Sigmoid colon (tissue), 7 donors: ENCODE measurements at regions of chr18 and their contacts with region 1.

Region 1: GRCh38 chr18:11851146-11851805 is at the start of gene CHMP1B:
- DNase-seq: peak; percentile 99
- H3K4me3 ChIP-seq: peak within 1 kb of the TSS; percentile 72 to 94 (median 88)
- H3K27ac ChIP-seq: peak within 1 kb of the TSS; percentile 93 to 99 (median 94)
- H3K4me1 ChIP-seq: peaks cover 0 to 34% (median 26%) of the 10 kb centered on the region in 4 donors
- H3K27me3 ChIP-seq: no peaks in the 10 kb centered on the region
- CTCF ChIP-seq: no peak
- EP300 ChIP-seq: peak in 2 of 4 donors; percentile 59 to 86
- POLR2A ChIP-seq: peak; percentile 98 to 99
- total RNA-seq, gene CHMP1B: 32.1 to 47.1 (median 38.2) TPM

Region 2: GRCh38 chr18:11733031-11733430 is 118.2 kb before region 1 on chr18:
- intact Hi-C with region 1: loop called (anchors 5 kb)
- DNase-seq: peak; percentile 88
- H3K4me3 ChIP-seq: peak overlapping the region in 3 of 4 donors; percentile 24 to 34 (median 26)
- H3K27ac ChIP-seq: no peak overlapping the region
- H3K4me1 ChIP-seq: peaks cover 0 to 7% (median 0%) of the 10 kb centered on the region in 4 donors
- H3K27me3 ChIP-seq: peaks cover 0 to 4% (median 0%) of the 10 kb centered on the region in 3 donors
- CTCF ChIP-seq: peak; percentile 41 to 91 (median 69)
- EP300 ChIP-seq: no peak
- POLR2A ChIP-seq: no peak

Region 3: DNA sequence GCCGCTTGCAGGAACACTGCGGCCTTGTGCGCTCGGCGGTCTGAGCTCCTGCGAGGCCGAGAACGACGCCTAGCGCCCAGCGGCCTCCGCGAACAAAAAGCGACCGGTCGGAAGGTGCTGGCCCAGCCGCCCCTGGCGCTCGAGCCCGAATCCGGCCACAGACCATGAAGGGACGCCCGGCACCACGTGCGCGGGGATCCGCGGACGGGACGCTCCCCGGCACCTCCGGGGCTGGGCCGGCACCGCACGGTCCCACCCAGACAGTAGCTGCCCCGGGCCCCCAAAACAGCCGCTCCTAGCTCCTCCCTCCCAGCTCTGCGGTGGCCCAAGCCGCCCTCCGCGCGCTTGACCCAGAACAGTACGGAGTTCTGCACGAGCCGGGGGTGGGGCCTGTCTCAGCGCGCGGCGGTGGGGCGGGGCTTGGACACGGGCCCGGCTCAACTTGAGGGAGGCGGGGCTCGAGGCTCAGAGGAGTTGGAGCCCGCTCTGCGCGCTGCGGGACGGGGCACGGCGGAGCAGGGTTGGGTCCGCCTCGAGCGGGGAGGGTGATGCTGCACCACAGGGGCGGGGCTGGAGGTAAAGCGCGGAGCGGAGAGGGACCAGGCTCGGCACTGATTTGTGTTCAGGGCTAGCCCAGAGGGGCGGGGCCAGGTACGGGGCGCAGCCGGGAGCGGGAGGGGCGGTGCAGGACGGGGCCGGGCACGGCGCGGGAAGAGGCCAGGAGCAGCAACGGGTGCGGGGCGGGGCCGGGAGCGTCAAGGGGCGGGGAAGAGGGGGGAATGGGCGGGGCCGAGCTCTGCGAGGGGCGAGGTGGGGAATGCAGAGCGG is 129.5 kb after region 1 on chr18:
- intact Hi-C with region 1: loop called (anchors 10 kb)
- DNase-seq: peak; percentile 100
- H3K4me3 ChIP-seq: peak overlapping the region; percentile 72 to 82 (median 80)
- H3K27ac ChIP-seq: peak overlapping the region; percentile 89 to 99 (median 96)
- H3K4me1 ChIP-seq: peaks cover 0 to 36% (median 19%) of the 10 kb centered on the region in 4 donors
- H3K27me3 ChIP-seq: no peaks in the 10 kb centered on the region
- CTCF ChIP-seq: peak in 1 of 4 experiments; percentile 7
- EP300 ChIP-seq: peak in 2 of 4 donors; percentile 2 to 43
- POLR2A ChIP-seq: peak; percentile 75 to 85

Region 4: GRCh38 chr18:12271376-12272235 is 420.3 kb after region 1 on chr18:
- intact Hi-C with region 1: loop called (anchors 10 kb)
- DNase-seq: peak; percentile 91
- H3K4me3 ChIP-seq: peak overlapping the region; percentile 17 to 51 (median 41)
- H3K27ac ChIP-seq: peak overlapping the region; percentile 65 to 87 (median 74)
- H3K4me1 ChIP-seq: peaks cover 0 to 10% (median 6%) of the 10 kb centered on the region in 4 donors
- H3K27me3 ChIP-seq: no peaks in the 10 kb centered on the region
- CTCF ChIP-seq: peak; percentile 82 to 90 (median 87)
- EP300 ChIP-seq: peak in 2 of 4 donors; percentile 1 to 11
- POLR2A ChIP-seq: no peak

Region 5: DNA sequence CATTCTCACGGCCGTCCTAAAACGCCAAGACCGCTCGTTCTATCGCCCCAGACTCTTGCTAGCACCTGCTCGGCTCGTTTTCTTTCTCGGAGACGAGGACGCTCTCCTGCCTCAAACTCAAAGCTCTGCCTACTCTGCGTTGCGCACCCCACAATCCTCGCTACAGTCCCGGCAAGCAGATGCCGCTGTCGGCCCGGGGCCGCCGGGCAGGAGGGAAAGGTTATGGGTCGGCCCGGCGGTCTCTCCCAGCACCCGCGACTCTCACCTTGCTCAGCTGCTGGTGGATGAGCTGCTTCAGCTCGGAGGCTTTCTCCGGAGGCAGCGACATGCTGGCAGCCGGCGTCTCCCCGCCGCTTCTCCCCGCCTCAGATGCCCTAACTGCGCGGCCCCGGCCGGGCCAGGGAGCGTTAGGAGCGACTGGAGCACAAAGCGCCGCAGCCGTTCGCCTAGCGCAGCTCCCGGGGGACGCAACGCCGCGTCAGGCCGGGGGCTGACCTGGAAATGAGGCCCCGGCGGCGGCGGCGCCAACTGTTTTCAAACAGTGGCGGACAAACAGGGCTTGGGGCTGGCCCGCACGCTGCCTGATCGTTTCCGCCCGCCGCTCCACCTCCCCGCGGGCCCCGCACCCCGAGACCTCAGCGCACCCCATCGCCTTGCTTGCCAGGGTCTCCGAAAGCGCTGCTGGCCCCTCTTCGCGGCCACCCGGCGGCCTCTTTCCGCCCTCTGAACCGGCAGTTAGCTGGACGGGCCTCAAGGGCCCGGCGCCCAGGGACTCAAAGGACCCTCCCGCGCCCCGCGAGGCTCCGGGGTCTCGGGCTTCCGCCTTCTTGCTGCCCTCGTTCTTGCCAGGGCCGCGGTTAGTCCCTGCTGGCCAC is 851.2 kb after region 1 on chr18 and contains the starts of genes CEP76 and PSMG2:
- intact Hi-C with region 1: loop called (anchors 5 kb)
- DNase-seq: peak; percentile 93
- H3K4me3 ChIP-seq: peak within 1 kb of the TSS; percentile 68 to 92 (median 88)
- H3K27ac ChIP-seq: peak within 1 kb of the TSS; percentile 90 to 95 (median 94)
- H3K4me1 ChIP-seq: peaks cover 0 to 34% (median 27%) of the 10 kb centered on the region in 4 donors
- H3K27me3 ChIP-seq: no peaks in the 10 kb centered on the region
- CTCF ChIP-seq: no peak
- EP300 ChIP-seq: no peak
- POLR2A ChIP-seq: peak; percentile 70 to 79
- total RNA-seq, gene CEP76: 5.8 to 9.1 (median 8.1) TPM
- total RNA-seq, gene PSMG2: 85.1 to 100 (median 92.4) TPM